Caco-2 (cell line): ENCODE measurements at regions of chr22 and their contacts with region 1.

Region 1: DNA sequence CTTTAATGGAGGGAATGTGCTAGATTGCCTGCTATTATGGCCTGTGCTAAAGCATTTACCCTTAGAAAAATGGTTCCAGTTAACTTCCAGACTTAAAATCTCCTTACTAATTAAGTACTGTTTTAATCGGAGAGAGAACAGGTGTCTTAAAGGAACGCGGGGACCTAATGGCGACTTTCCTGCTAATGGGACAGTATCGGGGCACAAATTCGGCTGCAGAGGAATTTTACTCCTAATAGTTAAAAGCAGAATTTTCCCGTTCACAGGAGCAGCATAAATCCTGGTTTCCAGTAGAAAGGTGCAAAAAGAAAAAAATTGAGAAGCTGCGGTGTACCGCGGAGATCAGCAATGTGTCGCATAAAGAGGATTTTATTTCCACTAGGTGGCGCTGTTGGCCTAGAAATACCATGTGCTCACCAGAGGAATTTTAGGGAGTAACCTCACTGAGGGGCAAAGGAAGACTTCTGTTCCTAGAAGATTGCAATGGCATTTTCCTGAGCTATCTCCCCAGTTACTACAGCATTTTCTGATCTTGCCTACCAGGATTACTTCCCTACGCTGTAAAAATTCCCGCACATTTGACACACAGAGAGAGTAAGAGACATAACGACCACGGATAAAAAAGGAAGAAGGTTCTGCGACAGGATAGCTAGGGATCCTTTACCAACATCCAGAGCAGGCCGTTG is 44.5 kb downstream of the ZNF280B start:
- DNase-seq: peak; percentile 54 to 74
- H3K4me3 ChIP-seq: no peak overlapping the region
- H3K4me3 Mint-ChIP-seq: no peak overlapping the region
- H3K27ac Mint-ChIP-seq: no peak overlapping the region
- H3K4me1 ChIP-seq: no peaks in the 10 kb centered on the region
- H3K4me1 Mint-ChIP-seq: peaks cover 7% of the 10 kb centered on the region
- H3K27me3 ChIP-seq: no peaks in the 10 kb centered on the region
- H3K27me3 Mint-ChIP-seq: peaks cover 2% of the 10 kb centered on the region
- CTCF ChIP-seq: peak; percentile 68 to 76

Region 2: GRCh38 chr22:22552630-22553029 is 88.6 kb after region 1 on chr22:
- CTCF ChIA-PET with region 1: interaction called, 5 read pairs
- POLR2A ChIA-PET with region 1: no interaction called
- intact Hi-C with region 1: loop called (anchors 5 kb)
- DNase-seq: peak in 1 of 2 experiments; percentile 44
- H3K4me3 ChIP-seq: no peak overlapping the region
- H3K4me3 Mint-ChIP-seq: no peak overlapping the region
- H3K27ac Mint-ChIP-seq: no peak overlapping the region
- H3K4me1 ChIP-seq: no peaks in the 10 kb centered on the region
- H3K4me1 Mint-ChIP-seq: no peaks in the 10 kb centered on the region
- H3K27me3 ChIP-seq: no peaks in the 10 kb centered on the region
- H3K27me3 Mint-ChIP-seq: peaks cover 2% of the 10 kb centered on the region
- CTCF ChIP-seq: peak; percentile 22 to 59

Region 3: DNA sequence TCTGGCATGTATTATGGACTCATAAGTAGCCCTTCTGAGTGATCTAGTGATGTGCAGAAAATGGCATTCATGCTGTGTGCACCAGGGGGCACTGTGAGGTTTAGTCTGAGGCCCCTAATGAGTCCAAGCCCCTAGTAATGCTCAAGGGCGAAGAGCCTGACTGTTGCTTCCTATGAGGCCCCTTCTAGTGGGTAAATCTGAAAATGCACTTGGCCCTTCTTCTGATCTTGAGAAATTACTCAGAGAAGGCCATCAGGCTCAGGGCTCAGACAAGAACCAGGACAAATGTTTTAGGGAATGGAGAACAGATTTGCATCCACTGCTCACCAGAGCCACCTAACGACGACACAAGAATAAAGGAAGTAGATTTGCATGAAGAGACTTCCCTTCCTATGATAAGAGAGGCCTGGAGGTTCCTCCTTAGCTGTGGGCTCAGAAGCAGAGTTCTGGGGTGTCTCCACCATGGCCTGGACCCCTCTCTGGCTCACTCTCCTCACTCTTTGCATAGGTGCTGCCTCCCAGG is 256.3 kb after region 1 on chr22:
- CTCF ChIA-PET with region 1: interaction called, 3 read pairs
- POLR2A ChIA-PET with region 1: no interaction called
- intact Hi-C with region 1: loop called (anchors 10 kb)
- DNase-seq: peak; percentile 54 to 61
- H3K4me3 ChIP-seq: no peak overlapping the region
- H3K4me3 Mint-ChIP-seq: no peak overlapping the region
- H3K27ac Mint-ChIP-seq: no peak overlapping the region
- H3K4me1 ChIP-seq: no peaks in the 10 kb centered on the region
- H3K4me1 Mint-ChIP-seq: no peaks in the 10 kb centered on the region
- H3K27me3 ChIP-seq: no peaks in the 10 kb centered on the region
- H3K27me3 Mint-ChIP-seq: peaks cover 15% of the 10 kb centered on the region
- CTCF ChIP-seq: peak; percentile 57 to 66